ENCODE measurements at regions of chr18 and their contacts with region 1.

Region 1: GRCh38 chr18:40935423-40935822 is 1019.6 kb upstream of the PIK3C3 start:
- DNase-seq: no peak

Region 2: DNA sequence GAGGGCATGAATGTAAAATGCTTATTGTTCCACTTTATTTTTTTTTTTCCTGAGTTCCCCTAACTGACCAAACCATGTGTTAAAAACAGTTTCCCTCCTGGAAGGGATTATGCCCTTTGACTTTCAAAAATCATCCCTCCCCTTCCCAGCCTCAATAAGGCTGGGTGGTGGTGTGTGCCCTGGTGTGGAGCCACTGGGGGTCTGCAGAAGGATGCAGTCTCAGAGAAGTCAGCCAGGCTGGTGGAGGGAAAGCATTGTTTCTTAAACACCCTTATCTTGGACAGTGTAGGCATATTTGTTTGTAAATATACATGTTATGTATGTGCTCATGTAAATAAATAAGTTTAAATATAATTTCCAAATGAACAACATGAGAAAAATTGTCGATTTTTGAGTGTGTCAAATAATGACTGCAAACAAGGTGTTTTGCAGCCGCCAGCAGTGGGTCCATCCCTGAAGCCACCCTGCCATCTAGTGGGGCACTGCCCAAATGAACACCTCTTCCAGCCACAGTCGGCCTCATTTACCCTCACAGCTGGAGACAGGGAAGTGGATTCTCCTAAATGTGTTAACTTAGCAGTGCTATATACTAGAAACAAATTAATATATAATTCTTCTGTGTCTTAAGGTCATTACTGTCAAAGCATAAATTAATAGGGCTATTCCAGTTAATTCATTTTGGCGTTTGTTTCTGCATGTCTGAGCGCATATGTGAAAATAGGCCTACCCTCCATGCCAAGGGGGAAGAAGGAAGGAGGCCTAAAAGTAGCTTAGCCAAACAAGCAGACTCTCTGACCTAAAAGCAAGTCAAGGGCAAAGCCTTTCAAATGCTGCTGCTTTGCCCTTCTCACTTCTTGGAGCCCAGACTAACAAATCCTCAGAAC is 810.0 kb after region 1 on chr18:
- intact Hi-C with region 1: loop called (anchors 10 kb)
- DNase-seq: no peak